Endothelial cell of umbilical vein (primary cell): ENCODE measurements at regions of chr12 and their contacts with region 1.

Region 1: GRCh38 chr12:71610031-71610795 is 53.4 kb downstream of the ZFC3H1 start:
- DNase-seq: no peak
- H3K4me3 ChIP-seq: no peak overlapping the region
- H3K27ac ChIP-seq: no peak overlapping the region
- H3K4me1 ChIP-seq: no peaks in the 10 kb centered on the region
- H3K27me3 ChIP-seq: no peaks in the 10 kb centered on the region
- CTCF ChIP-seq: no peak
- POLR2A ChIP-seq: no peak

Region 2: DNA sequence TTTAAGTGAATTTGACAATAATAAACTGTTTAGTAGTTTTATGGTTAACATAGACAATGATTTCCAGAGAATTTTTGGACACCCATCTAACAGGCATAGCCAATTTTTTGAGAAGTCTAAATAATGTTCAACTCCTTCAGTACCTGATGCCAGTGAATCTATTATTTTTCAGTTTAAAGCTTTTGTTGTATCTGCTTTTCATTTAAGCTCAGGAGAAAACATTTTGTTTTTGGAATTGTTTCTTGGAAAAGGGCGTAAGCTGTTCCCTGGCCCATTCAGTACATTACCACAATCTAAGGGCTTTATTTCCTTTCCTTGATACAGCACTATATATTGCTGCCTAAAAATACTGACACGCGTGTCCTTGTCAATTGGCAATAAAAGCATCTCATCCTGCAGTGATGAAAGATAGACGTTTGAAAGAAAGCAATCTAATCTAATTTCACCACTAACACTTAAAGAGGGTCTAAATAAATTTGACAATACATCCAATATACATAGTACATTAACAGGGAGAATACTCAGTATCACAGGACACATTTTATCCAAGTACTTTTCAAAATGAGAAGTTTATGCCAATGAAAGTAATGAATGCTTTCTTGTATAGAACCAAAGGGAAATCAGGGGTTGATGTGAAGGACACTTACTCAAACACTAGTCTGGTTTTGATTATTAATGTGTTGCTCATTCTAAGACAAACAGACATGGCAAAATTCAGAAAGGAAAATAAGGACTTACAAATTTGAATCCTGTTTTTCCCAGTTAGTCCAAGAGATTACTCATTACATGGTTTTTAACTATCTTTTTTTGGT is 274.9 kb before region 1 on chr12:
- CTCF ChIA-PET with region 1: no interaction called
- POLR2A ChIA-PET with region 1: no interaction called
- dilution Hi-C with region 1: no loop called
- intact Hi-C with region 1: no loop called
- DNase-seq: no peak
- H3K4me3 ChIP-seq: no peak overlapping the region
- H3K27ac ChIP-seq: no peak overlapping the region
- H3K4me1 ChIP-seq: no peaks in the 10 kb centered on the region
- H3K27me3 ChIP-seq: no peaks in the 10 kb centered on the region
- CTCF ChIP-seq: no peak
- POLR2A ChIP-seq: no peak

Region 3: GRCh38 chr12:71626098-71626497 is 15.9 kb after region 1 on chr12:
- CTCF ChIA-PET with region 1: no interaction called
- POLR2A ChIA-PET with region 1: no interaction called
- dilution Hi-C with region 1: no loop called
- intact Hi-C with region 1: no loop called
- DNase-seq: peak; percentile 61
- H3K4me3 ChIP-seq: no peak overlapping the region
- H3K27ac ChIP-seq: peak overlapping the region; percentile 64
- H3K4me1 ChIP-seq: peaks cover 19% of the 10 kb centered on the region
- H3K27me3 ChIP-seq: no peaks in the 10 kb centered on the region
- CTCF ChIP-seq: no peak
- POLR2A ChIP-seq: no peak

Region 4: DNA sequence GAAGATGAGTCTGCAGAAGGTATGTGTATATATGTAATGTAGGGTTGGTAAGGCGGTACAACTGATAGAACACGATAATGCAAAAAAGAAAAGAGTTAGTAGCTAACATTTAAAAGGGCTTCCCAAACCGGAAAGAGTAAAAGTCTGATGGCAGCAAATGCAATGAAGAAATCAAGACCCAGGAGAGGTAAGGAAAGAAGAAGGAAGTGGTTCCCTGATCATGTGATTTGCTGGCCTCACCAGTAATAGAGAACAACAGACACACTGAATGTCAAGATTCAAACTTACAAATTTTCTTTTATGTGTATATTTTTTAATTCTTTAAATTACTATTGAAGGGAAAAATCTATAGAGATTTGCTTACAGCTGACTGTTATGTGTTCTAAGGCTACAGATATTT is 35.1 kb after region 1 on chr12:
- CTCF ChIA-PET with region 1: interaction called, 3 read pairs
- POLR2A ChIA-PET with region 1: no interaction called
- dilution Hi-C with region 1: no loop called
- intact Hi-C with region 1: loop called (anchors 5 kb)
- DNase-seq: no peak
- H3K4me3 ChIP-seq: no peak overlapping the region
- H3K27ac ChIP-seq: no peak overlapping the region
- H3K4me1 ChIP-seq: no peaks in the 10 kb centered on the region
- H3K27me3 ChIP-seq: no peaks in the 10 kb centered on the region
- CTCF ChIP-seq: no peak
- POLR2A ChIP-seq: no peak